Activated CD4-positive, alpha-beta T cell treated with anti-CD3 and anti-CD28 coated beads, Interleukin-2, amount 10 ng/mL, durations not matched to agents 24 days and 14 days (primary cell): ENCODE measurements at regions of chr1 and their contacts with region 1.

Region 1: DNA sequence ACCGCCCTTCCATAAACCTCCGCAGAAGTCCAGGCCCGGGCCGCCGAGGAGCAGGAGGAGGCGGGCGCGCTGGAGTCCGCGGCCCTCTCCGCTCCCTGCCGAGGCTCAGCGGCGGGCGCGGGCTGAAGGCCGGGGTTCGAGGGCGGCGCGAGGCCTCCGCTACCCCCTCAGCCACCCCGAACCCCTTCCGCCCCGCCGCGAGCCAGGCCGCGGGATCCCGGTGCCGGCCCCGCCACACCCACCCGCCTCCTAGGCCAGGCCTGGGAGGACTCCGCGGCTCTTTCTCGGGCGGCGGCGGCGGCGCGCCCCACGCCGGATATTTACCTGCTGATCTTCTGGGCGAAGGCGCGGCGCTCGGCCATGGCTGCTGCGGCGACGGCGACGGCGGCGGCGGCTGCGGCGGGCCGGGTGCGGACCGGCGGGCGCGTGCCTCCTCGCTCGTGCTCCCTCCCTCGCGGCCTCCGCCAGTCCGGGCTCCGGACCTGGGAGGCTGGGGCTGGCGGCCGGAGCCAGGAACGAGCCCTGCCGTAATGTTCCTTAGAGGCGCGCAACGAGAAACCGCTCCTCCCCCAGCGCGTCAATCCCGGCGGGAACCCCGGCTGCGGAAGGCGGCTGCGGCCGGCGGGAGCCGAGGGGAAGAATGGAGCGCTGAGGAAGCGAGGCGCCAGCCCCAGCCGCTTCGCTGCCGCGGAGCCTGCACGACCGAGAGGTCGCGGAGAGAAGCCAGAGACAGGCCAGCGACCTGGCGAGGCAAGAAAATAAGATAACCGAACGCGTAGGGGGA is at the start of gene DOCK7:
- DNase-seq: peak; percentile 88
- H3K4me3 Mint-ChIP-seq: peak within 1 kb of the TSS; percentile 91
- H3K27ac Mint-ChIP-seq: peak within 1 kb of the TSS; percentile 85
- H3K4me1 Mint-ChIP-seq: peaks cover 21% of the 10 kb centered on the region
- H3K27me3 Mint-ChIP-seq: peaks cover 3% of the 10 kb centered on the region
- total RNA-seq, gene DOCK7: 17.8 and 18.0 TPM in 2 replicates

Region 2: GRCh38 chr1:62589321-62589720 is 98.8 kb before region 1 on chr1:
- intact Hi-C with region 1: no loop called
- DNase-seq: no peak
- H3K4me3 Mint-ChIP-seq: no peak overlapping the region
- H3K27ac Mint-ChIP-seq: no peak overlapping the region
- H3K4me1 Mint-ChIP-seq: no peaks in the 10 kb centered on the region
- H3K27me3 Mint-ChIP-seq: no peaks in the 10 kb centered on the region

Region 3: GRCh38 chr1:62621907-62622306 is 66.2 kb before region 1 on chr1:
- intact Hi-C with region 1: loop called (anchors 10 kb)
- DNase-seq: no peak
- H3K4me3 Mint-ChIP-seq: no peak overlapping the region
- H3K27ac Mint-ChIP-seq: no peak overlapping the region
- H3K4me1 Mint-ChIP-seq: peaks cover 11% of the 10 kb centered on the region
- H3K27me3 Mint-ChIP-seq: no peaks in the 10 kb centered on the region

Region 4: GRCh38 chr1:63099188-63099587 is 411.1 kb after region 1 on chr1:
- intact Hi-C with region 1: no loop called
- DNase-seq: no peak
- H3K4me3 Mint-ChIP-seq: no peak overlapping the region
- H3K27ac Mint-ChIP-seq: no peak overlapping the region
- H3K4me1 Mint-ChIP-seq: no peaks in the 10 kb centered on the region
- H3K27me3 Mint-ChIP-seq: peaks cover 4% of the 10 kb centered on the region

Region 5: DNA sequence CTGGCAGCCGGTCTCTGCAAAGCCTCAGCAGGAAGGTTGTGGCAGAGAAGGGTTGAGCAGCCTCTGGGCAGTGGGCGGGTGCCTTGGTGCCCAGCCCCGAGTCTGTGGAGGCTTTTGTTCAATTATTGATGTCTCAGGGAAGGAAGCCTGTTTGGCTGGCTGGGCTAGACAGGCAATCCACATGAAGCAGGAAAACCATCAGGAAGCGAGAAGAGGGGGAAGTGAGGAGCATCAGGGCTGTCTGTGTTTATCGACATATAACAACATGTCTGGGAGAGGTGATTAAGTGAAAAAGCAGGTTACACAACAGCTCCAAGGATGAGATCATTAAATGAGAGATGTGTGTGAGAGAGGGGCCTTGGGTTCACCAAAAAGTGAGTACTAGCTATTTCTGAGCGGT is 1620.8 kb after region 1 on chr1:
- intact Hi-C with region 1: no loop called
- DNase-seq: no peak
- H3K4me3 Mint-ChIP-seq: no peak overlapping the region
- H3K27ac Mint-ChIP-seq: no peak overlapping the region
- H3K4me1 Mint-ChIP-seq: no peaks in the 10 kb centered on the region
- H3K27me3 Mint-ChIP-seq: no peaks in the 10 kb centered on the region